ENCODE measurements at regions of chr2 and their contacts with region 1.

Region 1: DNA sequence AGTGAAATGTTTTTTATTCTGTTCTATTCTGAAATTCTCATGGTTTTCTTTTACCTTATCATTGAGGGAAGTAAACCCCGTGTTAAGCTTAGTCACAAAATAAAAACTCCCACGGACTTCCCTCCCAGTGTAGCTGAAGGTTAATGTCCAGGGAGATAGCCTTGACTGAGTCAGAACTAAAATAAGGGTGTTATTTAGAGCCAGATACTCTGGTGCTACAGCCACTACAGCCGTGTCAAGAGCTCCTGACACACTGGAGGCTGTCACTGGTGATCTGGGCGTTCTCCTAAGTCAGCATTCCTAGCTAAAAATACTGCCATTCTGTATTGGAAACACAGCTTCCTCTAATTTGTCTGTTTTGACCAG is 82.0 kb upstream of the RANBP2 start:
- DNase-seq: peak; percentile 56
- H3K4me3 ChIP-seq: no peak overlapping the region
- H3K27me3 ChIP-seq: no peaks in the 10 kb centered on the region
- CTCF ChIP-seq: no peak

Region 2: DNA sequence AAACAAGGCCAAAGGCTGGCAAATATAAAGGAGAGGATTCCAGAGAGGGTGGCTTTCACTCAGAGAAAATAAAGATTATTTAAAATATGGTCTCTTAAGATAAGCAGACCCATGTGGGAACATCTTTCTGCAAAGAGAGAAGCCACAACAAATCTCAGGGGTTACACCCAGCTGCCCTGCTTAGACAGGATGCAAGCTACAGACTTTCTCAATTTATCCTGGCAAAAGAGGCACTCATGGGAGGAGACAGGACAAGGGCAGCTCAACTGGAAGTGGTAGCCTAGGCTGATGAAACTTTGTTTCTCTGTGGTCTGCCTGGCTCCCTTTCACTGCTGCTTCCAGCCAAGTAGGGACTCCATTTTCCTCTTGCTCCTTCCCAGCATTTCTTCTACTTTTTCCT is 285.4 kb before region 1 on chr2:
- CTCF ChIA-PET with region 1: interaction called, 15 read pairs
- POLR2A ChIA-PET with region 1: no interaction called
- DNase-seq: no peak
- H3K4me3 ChIP-seq: no peak overlapping the region
- H3K27me3 ChIP-seq: peaks cover 4% of the 10 kb centered on the region
- CTCF ChIP-seq: no peak

Region 3: DNA sequence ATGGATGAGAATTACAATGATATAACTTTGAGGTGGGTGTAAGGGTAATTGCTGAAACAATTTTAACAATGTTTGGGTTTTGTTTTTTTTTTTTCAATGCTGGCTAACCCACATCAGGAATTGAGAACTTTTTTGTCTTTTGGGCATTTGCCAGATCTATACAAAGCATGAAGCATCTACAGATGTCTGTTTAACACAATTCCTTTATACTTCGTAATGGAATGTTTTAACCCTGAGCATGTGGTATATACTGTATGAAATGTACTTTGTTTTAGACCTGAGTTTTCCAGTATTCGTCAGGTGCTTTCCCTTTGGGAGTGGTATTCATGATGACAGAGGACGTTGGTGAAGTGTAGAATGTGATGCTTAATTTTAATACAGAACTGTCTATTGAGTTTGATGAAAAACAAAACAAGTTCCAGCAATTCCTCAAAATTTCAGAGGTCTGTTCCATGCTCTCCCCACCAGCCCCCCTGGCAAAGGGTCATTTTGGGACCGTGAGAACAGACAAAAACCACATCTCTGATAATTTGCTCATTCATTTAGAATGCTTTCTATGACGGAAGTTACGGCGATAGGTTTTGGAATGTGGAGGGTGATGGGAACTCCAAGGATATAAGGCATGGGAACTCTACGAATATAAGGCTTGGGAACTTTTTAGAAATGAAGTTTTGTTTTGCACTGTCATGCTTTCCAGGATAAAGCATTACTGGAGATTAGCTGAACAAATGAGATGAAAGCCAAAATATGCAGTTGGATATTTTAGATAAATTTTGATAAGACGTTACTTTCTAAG is 88.9 kb before region 1 on chr2:
- CTCF ChIA-PET with region 1: no interaction called
- POLR2A ChIA-PET with region 1: no interaction called
- DNase-seq: no peak
- H3K4me3 ChIP-seq: no peak overlapping the region
- H3K27me3 ChIP-seq: no peaks in the 10 kb centered on the region
- CTCF ChIP-seq: no peak

Region 4: DNA sequence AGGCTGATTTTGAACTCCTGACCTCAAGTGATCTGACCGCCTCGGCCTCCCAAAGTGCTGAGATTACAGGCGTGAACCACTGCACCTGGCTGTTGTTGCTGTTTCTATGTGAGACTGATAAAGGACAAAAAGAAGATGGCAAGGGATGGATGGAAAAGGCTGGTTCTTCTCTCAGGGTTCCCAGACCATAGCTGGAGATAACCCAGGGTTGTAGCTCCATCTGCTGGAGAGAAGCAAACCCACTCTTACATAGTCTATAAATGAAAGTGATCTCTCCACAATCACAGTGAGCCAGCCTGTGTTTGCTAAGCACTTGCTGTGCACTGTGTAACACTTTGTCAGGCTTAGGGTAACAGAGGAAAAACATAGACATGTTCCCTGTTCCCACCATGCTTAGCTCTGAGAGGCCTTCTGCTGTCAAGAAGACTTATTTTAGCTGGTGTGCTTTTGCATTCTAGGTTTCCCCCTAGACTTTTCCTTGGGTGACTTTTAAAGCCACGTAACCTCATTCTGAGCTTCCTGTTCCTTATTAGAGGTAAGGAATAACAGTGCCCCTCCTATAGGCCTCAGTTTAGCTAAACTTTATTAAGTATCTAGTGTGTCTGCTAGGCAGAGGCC is 53.3 kb before region 1 on chr2:
- CTCF ChIA-PET with region 1: interaction called, 18 read pairs
- POLR2A ChIA-PET with region 1: no interaction called
- DNase-seq: no peak
- H3K4me3 ChIP-seq: no peak overlapping the region
- H3K27me3 ChIP-seq: no peaks in the 10 kb centered on the region
- CTCF ChIP-seq: peak; percentile 81

Region 5: DNA sequence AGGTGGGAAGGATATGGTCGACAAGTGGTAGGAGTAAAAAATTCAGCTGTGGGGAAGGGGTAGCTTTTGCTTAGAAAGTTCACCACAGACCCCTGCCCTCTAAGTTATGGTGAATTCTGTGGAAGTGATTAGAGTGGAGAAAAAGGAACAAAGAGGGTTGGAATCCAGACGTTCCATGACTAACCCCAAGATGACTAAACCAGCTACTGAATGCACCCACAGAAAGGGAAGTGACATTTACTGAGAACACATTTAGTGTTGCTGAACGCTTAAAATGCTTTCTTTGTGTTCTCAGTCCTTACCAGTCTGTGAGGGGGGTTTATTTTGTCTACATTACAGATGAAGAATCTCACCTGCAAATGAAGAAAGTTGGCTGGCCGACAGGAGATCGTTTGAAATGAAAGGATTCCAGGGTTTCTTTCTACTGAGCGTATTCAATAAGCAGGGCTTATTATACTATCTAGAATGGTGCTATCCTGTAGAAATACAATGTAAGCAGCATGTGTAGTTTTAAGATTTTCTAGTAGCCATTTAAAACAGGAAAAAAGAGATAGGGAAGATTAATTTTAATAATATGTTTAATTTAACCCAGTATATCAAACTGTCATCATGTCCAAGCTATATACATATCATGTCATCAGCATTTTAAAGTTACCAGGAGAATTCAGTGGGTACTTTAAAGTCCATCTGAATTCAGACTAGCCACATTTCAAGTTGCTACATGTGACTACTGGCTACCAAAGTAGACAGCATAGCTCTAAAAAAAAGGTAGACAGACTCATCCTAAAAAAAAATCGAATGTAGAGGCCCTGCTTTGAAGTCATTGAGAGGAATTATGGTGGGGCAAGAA is 42.9 kb before region 1 on chr2:
- CTCF ChIA-PET with region 1: interaction called, 28 read pairs
- POLR2A ChIA-PET with region 1: no interaction called
- DNase-seq: peak; percentile 56
- H3K4me3 ChIP-seq: no peak overlapping the region
- H3K27me3 ChIP-seq: no peaks in the 10 kb centered on the region
- CTCF ChIP-seq: no peak

Region 6: DNA sequence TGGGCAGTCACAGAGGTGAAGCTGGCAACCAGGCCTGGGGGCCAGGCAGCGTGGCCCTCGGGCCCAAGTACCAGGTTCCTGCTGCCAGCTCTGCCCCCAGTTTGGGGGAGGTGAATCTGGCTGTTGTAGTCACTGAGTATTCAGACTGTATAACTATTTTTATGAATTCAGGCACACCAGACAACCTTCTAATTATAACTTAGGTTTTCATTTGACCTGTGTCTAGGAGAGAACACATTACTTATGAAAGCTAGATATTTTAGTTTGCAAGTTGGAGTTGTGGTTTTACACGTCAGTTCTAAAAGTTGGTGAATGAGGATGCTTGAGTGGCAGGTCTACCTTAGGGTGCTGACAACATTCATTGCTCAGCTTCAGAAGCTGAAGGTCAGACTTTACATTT is 31.3 kb before region 1 on chr2:
- CTCF ChIA-PET with region 1: interaction called, 53 read pairs
- POLR2A ChIA-PET with region 1: no interaction called
- DNase-seq: no peak
- H3K4me3 ChIP-seq: no peak overlapping the region
- H3K27me3 ChIP-seq: no peaks in the 10 kb centered on the region
- CTCF ChIP-seq: no peak

Region 7: DNA sequence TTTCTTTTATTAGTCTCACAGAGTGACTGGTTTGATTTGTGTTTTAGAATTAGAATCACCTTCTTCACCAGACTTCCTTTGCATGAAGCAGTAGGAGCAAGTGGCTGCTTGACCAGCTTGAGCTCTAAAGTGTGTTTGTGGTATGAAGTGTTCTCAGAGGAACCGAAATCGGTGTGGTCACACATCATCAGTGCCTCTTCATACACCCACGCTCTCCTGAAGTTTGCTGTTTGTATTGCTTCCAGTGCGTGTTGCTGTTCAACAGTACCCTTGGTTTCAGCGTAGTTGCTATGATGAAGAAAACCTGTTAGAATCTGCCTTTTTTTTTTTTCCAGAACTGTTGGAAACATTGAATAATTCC is 25.2 kb before region 1 on chr2:
- CTCF ChIA-PET with region 1: interaction called, 53 read pairs
- POLR2A ChIA-PET with region 1: no interaction called
- DNase-seq: no peak
- H3K4me3 ChIP-seq: no peak overlapping the region
- H3K27me3 ChIP-seq: no peaks in the 10 kb centered on the region
- CTCF ChIP-seq: no peak

Region 8: DNA sequence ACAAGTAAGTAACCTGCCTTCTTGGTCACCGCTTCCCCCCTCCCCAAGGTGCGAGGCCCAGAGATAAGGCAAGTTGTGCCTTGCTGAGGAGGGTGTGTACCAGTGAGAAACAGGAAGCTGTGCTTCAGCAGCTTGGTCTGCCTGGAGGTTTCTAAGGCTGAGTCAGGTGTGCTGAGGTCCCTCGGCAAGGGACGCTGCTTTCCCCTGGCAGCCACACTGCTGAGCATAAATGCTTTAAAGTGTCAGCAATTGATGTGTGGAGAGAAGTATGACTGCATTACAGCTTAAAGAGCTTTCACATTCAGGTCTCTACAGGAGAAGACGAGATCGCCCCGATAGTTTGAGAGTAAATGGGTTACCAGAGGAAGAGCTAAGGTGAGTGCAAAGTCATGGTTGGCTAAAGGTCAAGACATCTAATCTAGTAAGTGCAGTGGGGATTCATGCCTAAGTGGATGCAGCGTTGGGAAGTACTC is 16.2 kb before region 1 on chr2:
- CTCF ChIA-PET with region 1: interaction called, 64 read pairs
- POLR2A ChIA-PET with region 1: no interaction called
- DNase-seq: no peak
- H3K4me3 ChIP-seq: no peak overlapping the region
- H3K27me3 ChIP-seq: no peaks in the 10 kb centered on the region
- CTCF ChIP-seq: no peak